ENCODE measurements at regions of chr3 and their contacts with region 1.

Region 1: DNA sequence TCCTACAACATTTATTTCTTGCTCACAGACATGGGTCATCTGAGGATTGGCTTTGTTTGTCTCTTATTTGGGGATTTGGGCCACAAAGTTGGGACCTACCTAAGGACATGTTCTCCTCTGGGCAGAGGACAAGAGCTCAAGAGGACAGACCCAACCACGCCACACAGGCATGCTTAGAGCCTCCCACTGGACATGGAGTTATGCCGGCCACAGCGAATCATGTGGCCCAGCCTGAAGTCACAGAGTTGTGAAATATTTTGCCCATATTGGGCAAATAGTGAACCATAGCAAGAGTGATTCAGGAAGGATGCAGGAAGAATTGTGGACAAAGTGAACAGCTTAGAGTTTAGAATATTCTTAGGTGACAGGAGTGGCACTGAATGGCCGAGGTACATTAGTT is 9.9 kb downstream of the TRAK1 start:
- DNase-seq: no peak
- H3K4me3 ChIP-seq: no peak overlapping the region
- H3K27ac ChIP-seq: no peak overlapping the region
- H3K4me1 ChIP-seq: peaks cover 3 to 10% of the 10 kb centered on the region in 2 experiments; a peak in 3 of 4 replicates
- H3K27me3 ChIP-seq: no peaks in the 10 kb centered on the region
- CTCF ChIP-seq: no peak
- EP300 ChIP-seq: no peak
- RAD21 ChIP-seq: no peak

Region 2: DNA sequence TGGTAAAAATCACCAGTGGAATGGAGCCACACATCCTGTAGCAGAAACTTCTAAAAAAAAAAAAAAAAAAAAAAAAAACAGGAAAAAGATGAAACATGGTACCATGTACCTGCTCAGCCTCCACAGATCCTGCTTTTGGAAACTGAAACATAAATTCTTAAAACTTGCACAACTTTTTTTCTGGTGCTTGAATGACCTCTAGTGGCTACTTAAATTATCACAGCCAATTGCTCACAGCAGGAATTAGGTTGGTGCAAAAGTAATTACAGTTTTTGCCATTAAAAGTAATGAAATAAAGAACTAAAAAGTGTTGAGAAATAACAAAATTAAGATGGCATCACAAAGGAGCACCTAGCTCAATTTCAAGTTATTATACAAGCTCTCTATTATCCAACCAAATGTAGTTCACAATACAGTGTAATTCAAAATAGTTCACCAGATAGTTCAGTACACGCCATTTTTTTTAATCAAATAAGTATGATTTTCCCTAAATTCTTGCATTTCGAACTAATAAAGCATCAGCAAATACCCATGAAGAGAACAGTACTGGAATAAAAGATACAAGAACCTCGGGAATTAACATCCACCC is 219.7 kb before region 1 on chr3:
- CTCF ChIA-PET with region 1: interaction called, 11 read pairs
- POLR2A ChIA-PET with region 1: no interaction called
- DNase-seq: peak; percentile 29
- H3K4me3 ChIP-seq: no peak overlapping the region; a peak in 1 of 4 replicates
- H3K27ac ChIP-seq: no peak overlapping the region
- H3K4me1 ChIP-seq: no peaks in the 10 kb centered on the region
- H3K27me3 ChIP-seq: no peaks in the 10 kb centered on the region
- CTCF ChIP-seq: peak; percentile 69
- EP300 ChIP-seq: no peak
- RAD21 ChIP-seq: peak; percentile 86

Region 3: GRCh38 chr3:41961750-41962679 is 139.0 kb before region 1 on chr3 and contains the start of gene ULK4:
- CTCF ChIA-PET with region 1: interaction called, 15 read pairs
- POLR2A ChIA-PET with region 1: interaction called, 6 read pairs
- DNase-seq: peak; percentile 89
- H3K4me3 ChIP-seq: peak within 1 kb of the TSS; percentile 78 to 80
- H3K27ac ChIP-seq: peak within 1 kb of the TSS; percentile 67 to 84
- H3K4me1 ChIP-seq: peaks cover 0 to 9% of the 10 kb centered on the region in 2 experiments; a peak in 1 of 4 replicates
- H3K27me3 ChIP-seq: no peaks in the 10 kb centered on the region
- CTCF ChIP-seq: no peak
- EP300 ChIP-seq: peak; percentile 47 to 76; a peak in 2 of 4 replicates
- RAD21 ChIP-seq: 0 out of 2 replicates have a peak, but pooled peaks have one; percentile 12
- polyA plus RNA-seq, gene ULK4: 6.2 and 7.8 TPM in 2 replicates

Region 4: GRCh38 chr3:42025370-42026138 is 75.5 kb before region 1 on chr3:
- CTCF ChIA-PET with region 1: interaction called, 11 read pairs
- POLR2A ChIA-PET with region 1: no interaction called
- DNase-seq: peak; percentile 80
- H3K4me3 ChIP-seq: peak overlapping the region in 1 of 2 experiments; percentile 31; a peak in 1 of 4 replicates
- H3K27ac ChIP-seq: peak overlapping the region; percentile 82 to 97
- H3K4me1 ChIP-seq: peaks cover 16 to 18% of the 10 kb centered on the region in 2 experiments
- H3K27me3 ChIP-seq: no peaks in the 10 kb centered on the region
- CTCF ChIP-seq: no peak
- EP300 ChIP-seq: no peak; a peak in 1 of 4 replicates
- RAD21 ChIP-seq: no peak

Region 5: DNA sequence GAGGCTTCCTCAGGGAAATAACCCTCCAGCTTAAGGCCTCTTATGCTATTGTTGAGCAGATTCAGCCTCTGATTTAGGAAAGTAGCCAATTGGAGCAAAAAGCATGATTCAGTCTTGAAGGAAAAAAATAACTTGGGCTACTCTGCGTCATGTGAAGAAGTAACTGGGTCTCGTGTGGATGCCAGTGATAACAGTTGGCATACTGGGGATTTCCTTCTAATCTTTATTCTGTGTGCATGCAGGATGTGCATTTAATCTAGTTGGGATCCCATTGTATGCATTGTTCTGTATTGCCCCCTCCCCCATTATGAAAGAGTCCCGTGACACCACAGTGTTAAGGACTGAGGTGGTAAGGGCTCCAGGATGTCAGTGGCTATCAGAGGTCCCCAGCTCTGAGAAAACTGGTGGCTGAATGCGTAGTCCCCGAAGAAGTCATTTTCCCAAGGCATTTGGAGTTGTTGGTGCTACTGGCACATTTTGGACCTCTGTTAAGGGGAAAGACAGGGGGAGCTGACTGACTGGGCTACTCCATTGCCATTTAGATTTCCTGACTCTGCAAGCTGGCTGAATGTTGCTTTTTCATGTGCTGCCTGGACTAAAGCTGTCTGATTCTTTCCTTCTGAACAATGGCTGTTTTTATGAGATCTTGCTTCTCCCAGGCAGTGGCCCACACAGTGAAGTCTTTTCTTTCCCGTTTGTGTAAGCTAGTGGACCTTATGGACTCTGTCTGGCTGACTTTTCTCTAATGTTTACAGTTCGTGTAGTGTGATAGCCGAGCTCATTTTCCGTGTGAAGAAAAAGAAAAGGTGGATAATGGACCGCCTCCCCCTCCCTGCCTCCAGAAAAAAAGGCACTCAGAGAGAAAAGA is 48.3 kb before region 1 on chr3:
- CTCF ChIA-PET with region 1: interaction called, 18 read pairs
- POLR2A ChIA-PET with region 1: no interaction called
- DNase-seq: no peak
- H3K4me3 ChIP-seq: no peak overlapping the region
- H3K27ac ChIP-seq: peak overlapping the region; percentile 25 to 29; a peak in 2 of 4 replicates
- H3K4me1 ChIP-seq: peaks cover 0 to 18% of the 10 kb centered on the region in 2 experiments; a peak in 1 of 4 replicates
- H3K27me3 ChIP-seq: no peaks in the 10 kb centered on the region
- CTCF ChIP-seq: no peak
- EP300 ChIP-seq: no peak
- RAD21 ChIP-seq: no peak

Region 6: GRCh38 chr3:42129014-42129953 is 28.2 kb after region 1 on chr3:
- CTCF ChIA-PET with region 1: interaction called, 12 read pairs
- POLR2A ChIA-PET with region 1: no interaction called
- DNase-seq: no peak
- H3K4me3 ChIP-seq: no peak overlapping the region
- H3K27ac ChIP-seq: no peak overlapping the region
- H3K4me1 ChIP-seq: no peaks in the 10 kb centered on the region
- H3K27me3 ChIP-seq: no peaks in the 10 kb centered on the region
- CTCF ChIP-seq: no peak
- EP300 ChIP-seq: no peak
- RAD21 ChIP-seq: no peak

Region 7: GRCh38 chr3:42236611-42237010 is 135.6 kb after region 1 on chr3:
- CTCF ChIA-PET with region 1: no interaction called
- POLR2A ChIA-PET with region 1: no interaction called
- DNase-seq: no peak
- H3K4me3 ChIP-seq: no peak overlapping the region
- H3K27ac ChIP-seq: no peak overlapping the region
- H3K4me1 ChIP-seq: no peaks in the 10 kb centered on the region
- H3K27me3 ChIP-seq: no peaks in the 10 kb centered on the region
- CTCF ChIP-seq: no peak
- EP300 ChIP-seq: no peak
- RAD21 ChIP-seq: no peak

Region 8: GRCh38 chr3:42906070-42906847 is 805.2 kb after region 1 on chr3 and contains the start of gene ZNF662:
- CTCF ChIA-PET with region 1: no interaction called
- POLR2A ChIA-PET with region 1: no interaction called
- DNase-seq: peak; percentile 88
- H3K4me3 ChIP-seq: peak within 1 kb of the TSS in 1 of 2 experiments; percentile 43; a peak in 2 of 4 replicates
- H3K27ac ChIP-seq: no peak within 1 kb of the TSS
- H3K4me1 ChIP-seq: peaks cover 0 to 8% of the 10 kb centered on the region in 2 experiments; a peak in 2 of 4 replicates
- H3K27me3 ChIP-seq: no peaks in the 10 kb centered on the region; the same call in 1 of the 2 replicates
- CTCF ChIP-seq: no peak
- EP300 ChIP-seq: no peak
- RAD21 ChIP-seq: no peak
- polyA plus RNA-seq, gene ZNF662: 0.30 and 0.44 TPM in 2 replicates